Gastrocnemius medialis (tissue), 4 donors: ENCODE measurements at regions of chr10 and their contacts with region 1.

Region 1: DNA sequence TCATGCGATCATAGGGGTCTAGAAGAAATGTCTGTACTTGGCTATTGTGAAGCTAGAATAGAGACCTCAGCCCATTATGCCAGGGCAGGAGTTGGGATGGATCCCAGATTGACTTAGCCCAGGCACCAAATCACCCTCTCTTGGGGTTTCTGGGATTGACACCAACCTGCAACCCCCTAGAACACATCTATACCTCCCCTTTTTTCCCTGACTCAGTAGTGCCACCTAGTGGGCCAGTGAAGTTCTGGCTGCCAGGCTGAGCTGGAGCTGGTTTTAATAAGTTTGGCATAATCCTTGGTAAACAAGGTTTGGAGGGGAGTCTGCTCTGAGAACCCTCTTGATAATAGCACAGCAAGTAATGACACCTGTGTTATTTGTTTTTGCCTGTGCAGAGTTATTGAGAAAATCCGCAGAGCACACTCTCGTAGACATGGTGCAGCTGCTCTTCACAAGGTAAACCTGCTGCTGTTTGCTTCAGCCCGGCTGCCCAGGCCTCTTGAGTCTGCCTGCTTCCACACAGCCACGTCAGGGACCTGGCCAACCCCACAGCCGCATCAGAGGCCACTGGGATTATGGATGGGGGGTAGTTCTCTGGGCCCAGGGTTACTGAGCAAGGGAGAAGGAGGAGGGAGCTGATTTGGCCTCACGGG is 43.3 kb upstream of the NFKB2 start:
- DNase-seq: peak in 1 of 2 donors; percentile 35
- ATAC-seq: peak in 1 of 2 donors; percentile 20
- H3K4me3 ChIP-seq: no peak overlapping the region
- H3K27ac ChIP-seq: no peak overlapping the region
- H3K4me1 ChIP-seq: peaks cover 6 to 7% of the 10 kb centered on the region in 2 donors
- H3K27me3 ChIP-seq: no peaks in the 10 kb centered on the region
- CTCF ChIP-seq: peak; percentile 62 to 92 (median 84)
- POLR2A ChIP-seq: no peak

Region 2: DNA sequence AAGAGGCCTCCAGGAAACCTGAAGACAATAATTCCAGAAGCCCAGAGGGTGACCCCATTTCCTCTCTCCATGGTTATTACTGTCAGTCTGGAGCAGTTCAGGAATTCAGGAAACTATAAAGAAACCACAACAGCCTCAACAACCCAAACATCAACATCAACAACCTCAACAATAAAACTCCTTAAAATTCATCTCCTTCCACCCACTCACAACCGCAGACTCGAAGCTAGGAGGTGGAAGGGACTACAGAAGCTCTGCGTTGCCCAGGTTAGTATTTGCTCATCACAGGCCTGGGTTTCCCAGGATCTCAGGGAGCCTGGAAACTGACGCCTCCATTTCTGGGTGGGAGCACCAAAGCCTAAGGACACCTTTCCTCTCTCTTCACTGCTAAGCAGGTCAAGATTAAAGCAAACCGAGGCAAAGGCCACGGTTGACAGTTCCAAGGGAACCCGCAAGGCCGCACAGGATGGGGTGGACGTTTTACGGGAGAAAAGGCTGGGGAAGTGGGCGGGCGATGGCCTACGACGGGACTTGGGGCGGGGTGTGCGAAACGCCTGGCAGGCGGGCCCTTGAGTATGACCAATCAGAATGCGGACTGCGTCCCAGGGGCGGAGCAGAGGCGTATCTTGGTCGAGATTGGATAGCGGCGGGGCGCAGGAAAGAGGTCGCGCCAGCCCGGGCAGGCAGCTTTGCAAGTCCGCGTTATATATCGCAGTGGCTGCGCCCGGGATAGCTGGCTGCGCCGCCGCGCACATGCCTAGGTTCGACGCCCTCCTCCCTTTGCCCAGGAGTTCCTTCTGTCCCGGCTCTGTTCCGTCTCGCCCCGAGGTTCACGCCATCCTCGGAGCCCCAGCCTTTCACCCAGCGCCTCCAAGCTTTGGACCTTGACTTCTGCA is 126.3 kb before region 1 on chr10 and contains the start of gene ELOVL3:
- in situ Hi-C with region 1: loop called (anchors 5 kb)
- intact Hi-C with region 1: loop called (anchors 1 kb)
- DNase-seq: peak; percentile 89 to 93
- ATAC-seq: peak; percentile 84 to 89
- H3K4me3 ChIP-seq: peak within 1 kb of the TSS; percentile 41 to 55 (median 44)
- H3K27ac ChIP-seq: peak within 1 kb of the TSS; percentile 74 to 82 (median 79)
- H3K4me1 ChIP-seq: peaks cover 23 to 24% of the 10 kb centered on the region in 2 donors
- H3K27me3 ChIP-seq: no peaks in the 10 kb centered on the region
- CTCF ChIP-seq: peak in 1 of 5 experiments; percentile 30
- POLR2A ChIP-seq: peak in 1 of 2 donors; percentile 33
- total RNA-seq, gene ELOVL3: 0.51 TPM in 1 of 4 donors, not detected in the others